Breast epithelium (tissue), 4 donors: ENCODE measurements at regions of chr7 and their contacts with region 1.

Region 1: DNA sequence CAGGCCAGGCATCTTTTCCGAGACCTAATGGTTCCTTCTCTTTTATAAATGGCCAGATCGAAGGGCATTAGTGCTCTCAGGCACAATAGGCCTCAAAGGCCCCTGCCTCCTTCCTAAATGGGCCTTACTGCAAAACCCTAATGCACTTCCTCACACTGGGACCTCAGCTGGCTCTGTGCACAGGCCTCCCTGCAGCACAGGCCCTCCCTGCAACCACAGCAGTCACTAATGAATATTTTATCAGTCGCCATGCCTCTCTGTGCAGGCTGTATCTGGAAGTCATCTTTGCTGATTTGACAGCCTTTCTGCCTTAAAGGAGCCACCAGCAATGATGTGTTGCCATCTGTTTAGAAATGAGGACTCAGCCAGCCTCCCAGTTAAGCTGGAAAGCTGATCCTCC is 54.9 kb upstream of the SDK1 start:
- DNase-seq: no peak
- H3K4me3 ChIP-seq: no peak overlapping the region
- H3K27ac ChIP-seq: no peak overlapping the region
- H3K4me1 ChIP-seq: no peaks in the 10 kb centered on the region
- H3K27me3 ChIP-seq: no peaks in the 10 kb centered on the region
- CTCF ChIP-seq: no peak
- POLR2A ChIP-seq: no peak

Region 2: DNA sequence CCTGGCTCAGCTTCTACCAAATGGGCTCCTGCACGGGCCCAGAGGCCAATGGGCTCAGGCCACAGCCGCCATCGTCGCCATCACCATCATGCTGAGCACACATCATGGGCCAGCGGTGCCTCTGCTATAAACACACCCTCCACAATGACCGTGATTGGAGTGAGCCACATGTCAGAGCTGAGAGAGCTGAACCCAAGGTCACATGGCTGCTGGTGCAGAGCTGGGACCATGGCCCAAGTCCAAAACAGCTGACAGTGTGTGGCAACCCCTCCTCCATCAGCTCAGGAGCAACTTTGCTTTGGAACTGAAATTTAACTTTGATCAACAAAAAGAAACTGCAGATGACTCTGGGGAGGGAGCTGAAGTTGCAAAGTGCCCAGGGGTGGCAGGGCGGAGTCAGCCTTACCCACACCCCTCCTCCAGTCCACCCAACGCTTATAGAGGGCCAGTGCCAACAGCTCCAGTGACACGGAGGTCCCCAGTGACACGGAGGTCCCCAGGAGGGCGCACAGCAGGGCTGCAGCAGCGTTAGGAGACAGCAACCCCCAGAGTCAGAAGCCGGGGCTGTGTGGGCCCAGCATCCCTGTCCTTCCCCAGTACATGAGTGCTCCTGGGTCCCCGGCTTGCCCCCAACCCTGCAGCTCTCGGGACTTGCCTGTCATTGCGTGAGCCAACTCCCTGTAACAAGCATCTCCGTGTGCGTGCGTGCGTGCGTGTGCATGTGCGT is 1326.4 kb before region 1 on chr7:
- intact Hi-C with region 1: no loop called
- DNase-seq: no peak
- H3K4me3 ChIP-seq: peak overlapping the region in 1 of 3 donors; percentile 37
- H3K27ac ChIP-seq: no peak overlapping the region
- H3K4me1 ChIP-seq: no peaks in the 10 kb centered on the region
- H3K27me3 ChIP-seq: no peaks in the 10 kb centered on the region
- CTCF ChIP-seq: no peak
- POLR2A ChIP-seq: no peak

Region 3: DNA sequence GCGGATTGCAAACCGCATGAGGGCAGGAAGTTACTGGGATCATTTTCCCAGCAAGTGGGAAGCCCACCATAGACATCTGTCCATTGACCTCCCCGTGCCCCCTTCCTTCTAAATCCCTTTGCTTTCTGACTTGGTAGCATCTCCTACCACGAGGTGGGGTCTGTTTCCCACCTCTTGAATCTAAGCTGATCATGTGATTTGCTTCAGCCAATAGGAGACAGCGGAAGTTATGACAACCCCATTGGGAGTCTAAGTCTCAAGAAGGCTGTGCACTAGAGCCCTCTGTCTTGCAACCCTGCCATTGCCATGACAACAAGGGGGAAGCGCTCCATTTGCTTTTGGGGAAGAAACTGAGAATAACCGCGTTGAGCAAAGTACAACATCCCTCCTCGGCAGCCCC is 163.3 kb before region 1 on chr7:
- intact Hi-C with region 1: no loop called
- DNase-seq: no peak
- H3K4me3 ChIP-seq: no peak overlapping the region
- H3K27ac ChIP-seq: no peak overlapping the region
- H3K4me1 ChIP-seq: no peaks in the 10 kb centered on the region
- H3K27me3 ChIP-seq: no peaks in the 10 kb centered on the region
- CTCF ChIP-seq: no peak
- POLR2A ChIP-seq: no peak

Region 4: DNA sequence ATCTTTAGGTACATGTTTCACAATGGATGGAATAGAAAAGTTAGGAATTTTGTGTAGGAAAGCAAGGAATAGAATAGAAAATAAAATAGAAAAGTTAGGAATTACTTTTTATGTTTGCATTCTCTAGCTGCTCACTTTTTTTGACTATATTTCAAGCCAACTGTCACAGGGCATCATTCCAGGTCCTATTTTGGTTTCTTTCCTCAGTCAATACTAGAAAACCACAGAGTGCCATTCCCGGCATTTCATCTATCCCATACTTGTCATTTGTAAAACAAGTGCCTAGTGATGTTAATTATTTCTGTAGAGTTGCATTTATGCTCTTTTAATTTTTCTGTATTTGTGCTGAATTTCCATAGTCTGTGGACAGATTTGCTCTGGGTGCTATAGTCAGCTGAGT is 121.1 kb after region 1 on chr7:
- intact Hi-C with region 1: loop called (anchors 5 kb)
- DNase-seq: no peak
- H3K4me3 ChIP-seq: no peak overlapping the region
- H3K27ac ChIP-seq: no peak overlapping the region
- H3K4me1 ChIP-seq: no peaks in the 10 kb centered on the region
- H3K27me3 ChIP-seq: no peaks in the 10 kb centered on the region
- CTCF ChIP-seq: no peak
- POLR2A ChIP-seq: no peak